ENCODE measurements at regions of chr15 and their contacts with region 1.

Region 1: DNA sequence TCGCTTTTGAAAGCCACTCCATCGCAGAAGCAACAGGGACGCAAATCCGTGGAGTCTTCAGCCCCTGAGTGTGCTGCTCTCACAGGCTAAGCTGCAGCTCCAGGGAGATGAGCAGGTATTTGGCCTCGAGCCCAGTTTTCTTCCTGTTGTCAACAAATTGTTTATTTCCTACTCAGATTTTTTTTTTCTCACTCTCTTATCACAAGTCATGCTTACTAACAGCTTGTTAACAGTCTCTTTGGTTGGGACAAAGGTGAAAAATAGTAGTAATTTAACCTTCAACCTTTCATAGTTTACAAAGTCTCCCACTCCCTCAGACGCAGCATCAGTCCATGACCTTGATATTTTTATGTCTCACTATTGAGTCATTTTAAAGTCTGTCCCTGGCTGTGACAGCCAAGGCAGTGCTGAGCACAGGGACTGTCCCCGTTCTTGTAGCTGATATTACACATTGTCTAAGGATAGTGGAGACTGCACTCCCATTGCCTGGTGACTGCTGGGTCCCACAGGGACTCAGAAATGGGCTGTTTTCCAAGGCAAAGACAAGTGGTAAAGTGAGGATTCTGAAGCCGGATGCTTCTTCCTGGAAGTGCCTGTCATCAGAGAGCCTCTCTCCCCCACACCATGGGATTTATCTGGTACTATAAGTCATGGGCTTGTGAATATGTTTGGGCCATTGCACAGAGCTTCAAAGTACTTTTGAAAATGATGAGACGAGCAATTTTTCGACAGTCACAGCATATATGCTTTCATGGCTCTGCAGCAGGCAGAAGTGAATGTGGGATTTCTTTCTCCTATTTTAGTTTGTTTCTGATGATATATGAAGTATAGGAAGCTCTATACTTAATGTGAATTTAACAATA is 59.8 kb upstream of the UNC13C start:
- DNase-seq: peak; percentile 27
- ATAC-seq: peak; percentile 91
- H3K4me3 ChIP-seq: peak overlapping the region in 1 of 3 experiments; percentile 34; a peak in 2 of 6 replicates
- H3K27ac ChIP-seq: no peak overlapping the region
- H3K4me1 ChIP-seq: peaks cover 20% of the 10 kb centered on the region
- H3K27me3 ChIP-seq: peaks cover 1 to 4% of the 10 kb centered on the region in 2 experiments; a peak in 2 of 5 replicates
- CTCF ChIP-seq: no peak
- EP300 ChIP-seq: peak in 1 of 2 experiments; percentile 39; a peak in 1 of 4 replicates
- POLR2A ChIP-seq: no peak
- RAD21 ChIP-seq: no peak

Region 2: DNA sequence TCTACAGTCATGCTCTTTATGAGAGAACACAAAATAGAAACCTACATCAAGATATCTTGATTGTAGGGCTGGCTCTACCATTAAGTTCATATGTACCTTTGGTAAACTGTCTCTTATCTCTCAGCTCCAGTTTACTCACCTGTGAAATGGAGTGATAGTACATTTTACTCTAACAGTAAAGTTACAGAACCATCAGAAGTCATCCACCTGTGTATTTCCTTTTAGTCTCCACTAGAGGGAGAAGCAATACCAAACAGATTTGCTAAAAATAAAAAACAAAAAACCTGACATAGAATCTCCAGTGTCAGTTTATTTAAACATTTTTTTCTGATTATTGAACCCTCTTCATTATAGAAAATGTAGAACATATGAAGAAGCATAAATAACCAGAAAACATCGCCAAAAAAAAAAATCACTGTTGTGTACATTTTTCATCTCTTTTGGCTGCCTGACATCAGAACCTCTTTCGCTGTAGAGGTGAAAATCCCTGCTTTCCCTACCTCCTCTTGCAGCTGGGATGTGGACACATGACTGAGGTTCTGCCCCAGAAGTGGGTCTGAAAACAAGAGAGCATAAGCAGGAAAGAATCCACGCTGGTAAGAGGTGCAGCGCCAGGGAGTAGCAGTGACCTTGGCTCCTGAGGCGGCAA is 110.2 kb before region 1 on chr15:
- CTCF ChIA-PET with region 1: no interaction called
- POLR2A ChIA-PET with region 1: no interaction called
- in situ Hi-C with region 1: no loop called
- intact Hi-C with region 1: loop called (anchors 5 kb)
- DNase-seq: peak; percentile 12
- ATAC-seq: peak; percentile 50; the same call in 1 of the 3 replicates
- H3K4me3 ChIP-seq: no peak overlapping the region
- H3K27ac ChIP-seq: no peak overlapping the region
- H3K4me1 ChIP-seq: peaks cover 34% of the 10 kb centered on the region
- H3K27me3 ChIP-seq: no peaks in the 10 kb centered on the region
- CTCF ChIP-seq: peak; percentile 61
- EP300 ChIP-seq: no peak
- POLR2A ChIP-seq: no peak
- RAD21 ChIP-seq: 0 out of 2 replicates have a peak, but pooled peaks have one; percentile 30